ENCODE measurements at regions of chr19 and their contacts with region 1.

Region 1: DNA sequence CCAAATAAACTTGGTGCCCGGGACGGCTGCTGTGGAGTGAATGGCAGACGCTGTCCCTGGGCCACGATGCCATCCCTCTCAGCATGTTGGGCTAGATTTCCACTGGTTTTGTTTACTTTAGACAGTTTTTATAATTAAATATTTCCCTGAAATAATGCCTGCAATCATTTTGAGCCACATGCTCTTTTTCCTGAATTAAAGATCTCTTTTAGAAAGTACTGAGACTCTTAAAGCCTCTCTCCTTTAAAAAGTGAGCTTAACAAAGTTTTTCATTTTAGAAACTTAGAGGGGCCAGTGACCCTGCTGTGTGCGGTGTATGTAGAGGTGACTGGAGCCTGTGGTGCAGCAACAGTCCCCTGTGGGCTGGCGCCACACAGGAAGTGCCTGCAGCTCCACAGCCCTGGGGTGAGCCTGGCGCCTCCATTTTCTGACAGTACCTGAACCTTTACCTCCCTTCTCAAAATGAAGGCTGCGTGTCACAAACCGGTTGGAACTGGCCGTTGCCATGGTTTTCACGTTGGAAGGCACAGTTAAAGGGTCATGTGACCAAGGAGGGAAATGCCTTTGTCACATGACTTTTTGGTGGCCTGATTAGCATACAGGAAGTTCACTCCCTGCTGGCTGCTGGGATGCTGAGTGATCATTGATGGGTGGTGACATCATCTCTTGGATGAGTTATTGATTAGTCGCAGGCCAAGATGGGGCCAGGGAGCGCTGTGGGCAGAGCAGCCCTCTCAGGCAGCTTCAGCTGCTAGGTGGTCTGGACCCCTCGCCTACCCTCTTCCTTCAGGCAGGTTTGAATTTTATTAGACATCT is 26.3 kb downstream of the TSSK6 start:
- DNase-seq: peak; percentile 98
- H3K4me3 Mint-ChIP-seq: peak overlapping the region; percentile 76
- H3K27ac Mint-ChIP-seq: peak overlapping the region; percentile 98
- H3K4me1 Mint-ChIP-seq: peaks cover 36% of the 10 kb centered on the region
- H3K27me3 Mint-ChIP-seq: no peaks in the 10 kb centered on the region

Region 2: GRCh38 chr19:19366612-19367396 is 122.3 kb before region 1 on chr19:
- intact Hi-C with region 1: loop called (anchors 1 kb)
- DNase-seq: peak; percentile 93
- H3K4me3 Mint-ChIP-seq: peak overlapping the region; percentile 15
- H3K27ac Mint-ChIP-seq: peak overlapping the region; percentile 39
- H3K4me1 Mint-ChIP-seq: peaks cover 13% of the 10 kb centered on the region
- H3K27me3 Mint-ChIP-seq: no peaks in the 10 kb centered on the region

Region 3: DNA sequence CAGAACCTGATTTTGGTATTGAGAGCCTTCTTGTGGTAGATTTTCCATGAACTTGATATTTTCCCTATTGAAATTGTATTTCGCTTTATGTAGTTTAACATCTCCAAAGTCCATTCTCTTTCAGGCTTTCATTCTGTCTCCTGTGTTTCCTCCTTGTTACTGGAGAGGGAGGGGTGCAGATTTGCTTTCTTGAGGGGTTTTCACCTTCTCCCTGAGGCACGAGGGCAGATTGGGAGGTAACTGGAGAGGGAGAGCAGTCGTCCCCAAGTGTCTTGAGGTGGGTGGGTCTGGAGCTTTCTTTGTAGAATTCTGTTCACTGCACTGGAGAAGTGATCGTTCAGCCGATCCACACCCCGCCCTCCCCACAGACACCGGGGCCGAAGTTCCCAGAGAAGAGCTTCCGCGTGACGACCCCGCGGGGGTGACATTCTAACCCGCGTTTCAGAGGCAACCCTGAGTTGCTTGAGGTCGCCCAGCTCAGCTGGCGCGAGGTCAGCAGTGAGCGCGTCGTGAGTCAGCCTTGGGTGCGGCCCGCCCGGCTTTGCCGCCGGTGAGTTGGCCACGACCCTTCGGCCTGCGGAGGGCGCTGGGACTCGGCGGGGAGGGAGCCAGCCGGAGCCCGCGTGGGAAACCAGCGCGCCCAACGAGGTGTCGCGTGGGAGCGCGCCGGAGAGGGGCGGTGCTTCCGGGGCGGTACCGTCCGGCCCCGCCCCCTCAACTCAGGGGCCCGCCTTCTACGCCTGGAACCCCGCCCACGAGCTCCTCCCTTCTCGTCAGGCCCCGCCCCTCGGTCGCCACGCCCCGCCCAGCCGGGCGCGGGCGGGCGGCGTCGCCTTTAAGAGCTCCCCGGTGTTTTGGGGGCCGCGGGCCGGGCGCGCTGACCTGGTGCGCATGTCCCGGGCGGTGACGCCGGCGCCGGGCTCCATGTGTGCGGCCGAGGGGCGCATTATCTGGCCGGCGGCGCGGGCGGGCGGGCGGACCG is 83.9 kb before region 1 on chr19 and contains the start of gene GATAD2A:
- intact Hi-C with region 1: loop called (anchors 1 kb)
- DNase-seq: peak; percentile 97
- H3K4me3 Mint-ChIP-seq: peak within 1 kb of the TSS; percentile 90
- H3K27ac Mint-ChIP-seq: peak within 1 kb of the TSS; percentile 93
- H3K4me1 Mint-ChIP-seq: peaks cover 55% of the 10 kb centered on the region
- H3K27me3 Mint-ChIP-seq: no peaks in the 10 kb centered on the region
- total RNA-seq, gene GATAD2A: 134 and 135 TPM in 2 replicates

Region 4: DNA sequence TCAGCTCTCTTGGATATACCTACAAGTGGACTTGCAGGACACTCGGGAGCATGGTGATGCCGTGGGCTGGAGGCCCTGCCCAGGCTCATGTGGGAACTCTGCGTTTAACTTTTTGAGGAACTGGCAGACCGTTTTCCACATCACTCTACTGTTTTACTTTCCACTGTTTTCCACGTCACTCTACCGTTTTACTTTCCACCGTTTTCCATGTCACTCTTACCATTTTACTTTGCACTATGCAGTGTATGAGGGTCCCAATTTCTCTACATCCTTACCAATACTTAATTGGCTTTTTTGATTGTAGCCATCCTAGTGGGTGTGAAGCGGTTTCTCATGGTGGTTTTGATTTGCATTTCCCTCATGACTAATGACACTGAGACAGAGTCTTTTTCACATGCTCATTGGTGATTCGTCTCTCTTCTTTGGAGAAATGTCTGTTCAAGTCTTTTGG is 43.1 kb before region 1 on chr19:
- intact Hi-C with region 1: loop called (anchors 1 kb)
- DNase-seq: peak; percentile 70
- H3K4me3 Mint-ChIP-seq: peak overlapping the region; percentile 49
- H3K27ac Mint-ChIP-seq: peak overlapping the region; percentile 79
- H3K4me1 Mint-ChIP-seq: peaks cover 59% of the 10 kb centered on the region
- H3K27me3 Mint-ChIP-seq: no peaks in the 10 kb centered on the region

Region 5: DNA sequence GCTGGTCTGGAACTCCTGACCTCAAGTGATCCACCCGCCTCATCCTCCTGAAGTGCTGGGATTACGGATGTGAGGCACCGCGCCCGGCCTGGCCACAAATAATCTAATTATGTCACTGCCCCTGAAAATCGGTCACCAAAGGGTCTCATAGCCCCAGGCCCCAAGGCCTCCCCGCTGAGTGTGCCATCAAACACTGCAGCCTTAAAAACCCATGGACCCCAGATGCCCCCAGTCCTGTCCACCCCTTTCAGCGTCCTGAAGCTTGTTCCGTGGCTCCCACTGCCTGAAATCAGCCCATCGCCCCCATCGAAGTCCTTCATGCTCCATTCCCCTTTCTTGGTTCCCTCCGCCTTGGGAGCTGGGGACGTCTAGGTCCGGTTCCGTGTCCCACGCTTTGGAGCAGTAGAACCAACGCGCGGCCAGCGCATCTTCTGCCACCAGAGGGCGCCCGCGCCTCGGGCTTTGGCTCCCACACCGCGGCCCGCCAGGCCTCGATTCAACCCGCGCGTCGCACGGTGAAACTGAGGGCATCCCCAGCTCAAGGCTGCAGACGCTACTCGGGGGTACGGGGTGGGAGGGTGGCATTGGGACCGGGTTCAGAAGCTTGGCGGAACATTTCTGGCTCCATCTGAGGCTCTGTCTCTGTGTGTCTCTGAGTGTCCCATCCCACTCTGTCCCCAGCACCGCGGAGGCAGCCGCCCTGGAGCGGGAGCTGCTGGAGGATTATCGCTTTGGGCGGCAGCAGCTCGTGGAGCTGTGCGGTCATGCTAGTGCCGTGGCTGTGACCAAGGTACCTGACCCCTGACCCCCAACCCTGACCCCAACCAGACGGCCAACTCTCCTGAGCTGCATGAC is 43.1 kb after region 1 on chr19:
- intact Hi-C with region 1: no loop called
- DNase-seq: peak; percentile 96
- H3K4me3 Mint-ChIP-seq: peak overlapping the region; percentile 14
- H3K27ac Mint-ChIP-seq: peak overlapping the region; percentile 47
- H3K4me1 Mint-ChIP-seq: peaks cover 16% of the 10 kb centered on the region
- H3K27me3 Mint-ChIP-seq: peaks cover 3% of the 10 kb centered on the region

Measured in activated CD4-positive, alpha-beta T cell treated with anti-CD3 and anti-CD28 coated beads, Interleukin-2, amount 10 ng/mL, durations not matched to agents 24 days and 14 days (primary cell).